Endothelial cell of umbilical vein (primary cell): ENCODE measurements at regions of chr5 and their contacts with region 1.

Region 1: DNA sequence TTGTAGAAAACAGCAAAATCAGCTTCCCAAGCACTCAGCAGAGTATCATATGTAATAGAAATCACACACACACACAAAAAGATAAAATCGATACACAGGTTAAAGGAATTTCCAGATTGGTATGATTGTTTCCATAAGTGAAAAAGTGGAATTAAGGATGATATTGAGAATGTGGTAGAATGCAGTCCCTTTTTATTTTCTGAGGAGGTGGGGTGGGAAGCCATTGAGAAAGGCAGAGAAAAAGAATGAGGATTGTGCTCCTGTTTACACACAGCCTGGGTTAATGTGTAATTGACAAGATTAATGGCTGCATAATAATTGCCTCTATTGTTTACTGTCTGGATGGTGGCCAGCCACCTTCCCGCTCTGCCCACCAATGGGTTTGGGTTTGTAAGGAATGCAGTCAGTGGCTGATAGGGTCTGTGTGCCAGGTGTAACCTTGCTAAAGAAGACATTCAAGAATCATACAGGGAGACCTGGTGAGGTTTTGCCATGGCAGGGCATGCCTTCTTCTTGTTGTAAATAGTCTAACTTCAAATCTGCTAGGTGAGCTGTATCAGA is 177.2 kb upstream of the MAP3K1 start:
- DNase-seq: peak; percentile 64
- H3K4me3 ChIP-seq: no peak overlapping the region
- H3K27ac ChIP-seq: no peak overlapping the region
- H3K4me1 ChIP-seq: peaks cover 17% of the 10 kb centered on the region
- H3K27me3 ChIP-seq: no peaks in the 10 kb centered on the region
- CTCF ChIP-seq: no peak
- POLR2A ChIP-seq: no peak

Region 2: DNA sequence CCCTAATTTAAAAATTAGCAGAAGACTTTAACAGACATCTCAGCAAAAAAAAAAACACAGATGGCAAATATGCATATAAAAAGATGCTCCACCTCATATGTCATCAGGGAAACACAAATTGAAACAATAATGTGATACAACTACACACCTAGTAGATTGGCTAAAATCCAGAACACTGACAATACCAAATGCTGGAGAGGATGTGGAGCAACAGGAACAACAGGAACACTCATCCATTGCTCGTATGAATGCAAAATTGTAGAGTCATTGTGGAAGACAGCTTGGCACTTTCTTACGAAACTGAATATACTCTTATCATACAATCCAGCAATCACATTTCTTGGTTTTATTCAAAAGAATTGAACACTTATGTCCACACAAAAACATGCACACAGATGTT is 1433.1 kb before region 1 on chr5:
- CTCF ChIA-PET with region 1: no interaction called
- POLR2A ChIA-PET with region 1: no interaction called
- dilution Hi-C with region 1: no loop called
- intact Hi-C with region 1: loop called (anchors 5 kb)
- DNase-seq: no peak
- H3K4me3 ChIP-seq: no peak overlapping the region
- H3K27ac ChIP-seq: no peak overlapping the region
- H3K4me1 ChIP-seq: no peaks in the 10 kb centered on the region
- H3K27me3 ChIP-seq: peaks cover 11 to 25% of the 10 kb centered on the region in 2 experiments
- CTCF ChIP-seq: no peak
- POLR2A ChIP-seq: no peak

Region 3: GRCh38 chr5:56264417-56265025 is 373.6 kb before region 1 on chr5:
- CTCF ChIA-PET with region 1: no interaction called
- POLR2A ChIA-PET with region 1: no interaction called
- dilution Hi-C with region 1: no loop called
- intact Hi-C with region 1: no loop called
- DNase-seq: no peak
- H3K4me3 ChIP-seq: no peak overlapping the region
- H3K27ac ChIP-seq: no peak overlapping the region
- H3K4me1 ChIP-seq: no peaks in the 10 kb centered on the region
- H3K27me3 ChIP-seq: no peaks in the 10 kb centered on the region
- CTCF ChIP-seq: peak; percentile 45 to 54
- POLR2A ChIP-seq: no peak

Region 4: DNA sequence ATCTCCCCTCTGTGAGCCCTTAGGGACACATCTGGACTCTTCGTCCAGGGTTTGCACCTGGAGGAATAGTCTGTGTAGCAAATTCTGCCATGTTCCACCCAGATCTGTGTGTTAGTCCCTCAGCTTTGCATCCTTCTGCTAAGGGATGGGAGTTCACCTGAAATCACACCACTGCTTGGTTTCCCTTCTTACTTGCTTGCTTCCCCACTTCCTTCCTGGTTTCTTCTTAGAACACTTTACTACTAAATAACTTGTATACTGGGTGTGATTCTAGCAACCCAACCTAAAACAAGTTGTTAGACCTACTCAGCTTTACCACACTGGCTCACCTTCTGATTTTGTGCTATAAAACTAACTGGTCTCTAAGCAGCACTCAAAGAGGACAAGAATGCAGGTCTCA is 25.4 kb before region 1 on chr5:
- CTCF ChIA-PET with region 1: no interaction called
- POLR2A ChIA-PET with region 1: no interaction called
- dilution Hi-C with region 1: no loop called
- intact Hi-C with region 1: no loop called
- DNase-seq: no peak
- H3K4me3 ChIP-seq: no peak overlapping the region
- H3K27ac ChIP-seq: no peak overlapping the region
- H3K4me1 ChIP-seq: peaks cover 6% of the 10 kb centered on the region
- H3K27me3 ChIP-seq: no peaks in the 10 kb centered on the region
- CTCF ChIP-seq: no peak
- POLR2A ChIP-seq: no peak

Region 5: DNA sequence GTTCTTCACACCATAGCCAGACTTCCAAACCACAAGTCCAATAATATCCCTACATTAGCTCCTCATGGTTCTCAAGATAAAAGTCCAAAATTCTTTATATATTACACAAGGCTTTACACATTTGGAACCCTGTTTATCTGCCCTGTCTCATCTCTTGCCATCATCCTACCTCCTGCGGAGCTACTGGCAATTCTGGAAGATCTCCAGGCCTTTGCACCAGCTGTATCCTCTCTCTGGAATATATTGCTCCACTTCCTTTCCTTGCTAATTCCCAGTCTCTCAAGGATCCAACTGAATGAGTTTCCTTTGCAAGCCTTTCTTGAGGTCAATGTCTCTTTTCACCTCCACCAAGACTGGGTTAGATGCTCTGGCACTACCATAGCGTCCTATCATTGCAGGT is 355.1 kb after region 1 on chr5:
- CTCF ChIA-PET with region 1: no interaction called
- POLR2A ChIA-PET with region 1: no interaction called
- dilution Hi-C with region 1: no loop called
- intact Hi-C with region 1: no loop called
- DNase-seq: no peak
- H3K4me3 ChIP-seq: no peak overlapping the region
- H3K27ac ChIP-seq: no peak overlapping the region
- H3K4me1 ChIP-seq: no peaks in the 10 kb centered on the region
- H3K27me3 ChIP-seq: peaks cover 6 to 12% of the 10 kb centered on the region in 2 experiments
- CTCF ChIP-seq: no peak
- POLR2A ChIP-seq: no peak